GM12878 (cell line): ENCODE measurements at regions of chr5 and their contacts with region 1.

Region 1: DNA sequence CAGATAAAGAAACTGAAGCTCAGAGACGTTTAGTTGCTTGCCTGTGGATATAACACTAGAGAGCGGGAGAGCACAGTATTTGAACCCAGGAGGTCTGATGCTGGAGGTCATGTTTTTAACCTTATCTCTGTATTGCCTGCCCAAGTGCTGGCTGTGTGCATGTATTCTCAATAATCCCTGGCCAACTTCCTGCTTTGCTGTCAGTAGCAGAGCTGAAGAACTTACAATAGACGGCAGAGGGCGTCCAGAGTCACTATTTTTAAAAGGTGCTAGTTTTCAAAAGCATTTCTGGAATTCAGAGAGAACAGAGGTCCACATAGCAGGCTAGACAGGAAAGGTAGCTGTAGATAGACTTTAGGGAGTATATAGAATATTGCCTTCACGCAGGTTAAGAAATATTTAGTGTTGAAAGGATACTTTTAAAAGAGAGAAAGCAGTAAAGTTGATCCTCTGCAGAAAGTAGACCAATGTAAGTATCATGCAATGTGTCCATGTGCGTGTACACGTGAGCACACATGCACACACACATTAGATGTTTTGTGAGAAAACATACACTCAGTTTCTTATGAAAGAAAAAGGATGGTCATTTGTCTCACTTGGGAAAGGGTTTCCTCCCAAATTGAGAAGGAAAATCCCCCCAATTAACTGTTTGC is 46.3 kb downstream of the PTCD2 start:
- DNase-seq: peak; percentile 43
- ATAC-seq: peak; percentile 98
- H3K4me3 ChIP-seq: no peak overlapping the region
- H3K27ac ChIP-seq: no peak overlapping the region
- H3K4me1 ChIP-seq: peaks cover 17% of the 10 kb centered on the region
- H3K27me3 ChIP-seq: no peaks in the 10 kb centered on the region
- CTCF ChIP-seq: peak; percentile 67 to 82 (median 76)
- EP300 ChIP-seq: no peak
- POLR2A ChIP-seq: no peak
- RAD21 ChIP-seq: peak; percentile 97

Region 2: DNA sequence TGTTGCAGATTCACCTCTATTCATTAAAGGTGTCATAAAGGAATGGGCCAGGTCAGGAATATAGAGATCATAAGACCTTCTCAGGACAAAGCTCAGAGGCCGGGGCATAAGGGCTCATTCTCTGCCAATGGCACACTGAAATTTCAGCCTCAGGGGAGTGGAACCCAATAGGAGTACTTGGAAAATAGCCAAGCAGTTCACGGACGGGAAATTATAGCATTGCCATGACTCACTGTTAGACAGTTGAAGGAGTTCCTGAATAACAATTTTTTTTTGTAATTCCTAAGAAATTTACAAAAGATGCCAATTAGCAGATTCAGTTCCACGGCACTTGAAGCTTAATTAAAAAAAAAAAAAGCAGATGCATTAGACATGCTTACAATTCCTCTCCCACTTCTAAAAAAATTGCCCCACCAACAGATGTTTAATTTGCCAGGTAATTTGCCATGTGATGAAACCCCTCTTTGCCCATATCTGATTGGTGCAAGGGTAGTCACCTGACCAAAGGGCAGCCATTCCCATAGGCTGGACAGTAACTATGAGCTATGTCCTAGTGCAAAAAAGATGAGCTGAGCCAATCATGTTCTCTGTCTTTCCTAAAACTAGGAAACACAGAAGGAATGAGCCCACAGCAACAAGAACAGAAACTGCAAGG is 12.3 kb after region 1 on chr5:
- CTCF ChIA-PET with region 1: interaction called, 17 read pairs
- POLR2A ChIA-PET with region 1: no interaction called
- RAD21 ChIA-PET with region 1: interaction called, 7 read pairs
- SMC1A ChIA-PET with region 1: interaction called, 21 read pairs
- in situ Hi-C with region 1: no loop called
- intact Hi-C with region 1: no loop called
- DNase-seq: no peak
- ATAC-seq: no peak
- H3K4me3 ChIP-seq: no peak overlapping the region
- H3K27ac ChIP-seq: no peak overlapping the region
- H3K4me1 ChIP-seq: peaks cover 9% of the 10 kb centered on the region
- H3K27me3 ChIP-seq: no peaks in the 10 kb centered on the region
- CTCF ChIP-seq: no peak
- EP300 ChIP-seq: no peak
- POLR2A ChIP-seq: no peak
- RAD21 ChIP-seq: no peak

Region 3: GRCh38 chr5:72394688-72395087 is 28.2 kb after region 1 on chr5:
- CTCF ChIA-PET with region 1: interaction called, 61 read pairs
- POLR2A ChIA-PET with region 1: no interaction called
- RAD21 ChIA-PET with region 1: interaction called, 28 read pairs
- SMC1A ChIA-PET with region 1: interaction called, 25 read pairs
- in situ Hi-C with region 1: no loop called
- intact Hi-C with region 1: no loop called
- DNase-seq: no peak
- ATAC-seq: peak; percentile 89
- H3K4me3 ChIP-seq: no peak overlapping the region
- H3K27ac ChIP-seq: no peak overlapping the region
- H3K4me1 ChIP-seq: no peaks in the 10 kb centered on the region
- H3K27me3 ChIP-seq: no peaks in the 10 kb centered on the region
- CTCF ChIP-seq: peak; percentile 70 to 74 (median 74)
- EP300 ChIP-seq: no peak
- POLR2A ChIP-seq: no peak
- RAD21 ChIP-seq: peak; percentile 84

Region 4: DNA sequence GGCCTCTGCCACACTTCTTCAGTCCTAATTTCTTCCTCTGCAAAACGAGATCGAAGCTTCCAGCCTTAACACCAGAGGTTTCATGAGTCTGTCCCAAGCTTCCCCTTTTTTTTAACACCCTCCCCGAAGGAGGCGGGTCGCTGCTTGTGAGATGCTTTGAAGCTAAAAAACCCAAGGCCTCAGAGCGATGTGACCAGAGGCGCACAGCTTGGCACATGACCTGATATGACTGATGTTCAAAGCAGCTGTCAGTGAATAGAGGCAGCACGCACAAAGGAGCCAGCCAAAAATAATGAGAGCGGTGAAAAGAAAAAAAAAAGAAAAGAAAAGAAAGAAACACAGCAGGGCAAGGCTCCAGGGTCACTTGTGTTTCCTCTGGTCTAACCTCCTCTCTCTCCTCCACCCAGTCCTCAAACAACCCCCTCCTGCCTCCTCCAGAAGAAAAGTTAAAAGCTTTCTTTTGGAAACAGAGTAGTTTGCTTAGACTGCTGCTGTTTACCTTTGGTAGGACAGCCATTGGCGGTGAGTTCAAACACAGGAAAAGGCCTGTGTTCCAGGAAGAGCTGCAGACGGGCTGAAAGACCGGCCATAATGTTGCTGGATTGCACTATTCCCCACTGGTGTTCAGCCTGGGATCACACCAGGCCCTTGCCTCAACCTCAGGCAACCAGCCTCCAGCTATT is 151.7 kb after region 1 on chr5:
- CTCF ChIA-PET with region 1: interaction called, 238 read pairs
- POLR2A ChIA-PET with region 1: interaction called, 11 read pairs
- RAD21 ChIA-PET with region 1: interaction called, 159 read pairs
- SMC1A ChIA-PET with region 1: interaction called, 214 read pairs
- in situ Hi-C with region 1: loop called (anchors 10 kb)
- intact Hi-C with region 1: no loop called
- DNase-seq: no peak
- ATAC-seq: no peak; the same call in 2 of the 3 replicates
- H3K4me3 ChIP-seq: no peak overlapping the region
- H3K27ac ChIP-seq: peak overlapping the region; percentile 34
- H3K4me1 ChIP-seq: peaks cover 11% of the 10 kb centered on the region
- H3K27me3 ChIP-seq: no peaks in the 10 kb centered on the region
- CTCF ChIP-seq: no peak
- EP300 ChIP-seq: no peak
- POLR2A ChIP-seq: no peak
- RAD21 ChIP-seq: no peak

Region 5: GRCh38 chr5:72611118-72611730 is 244.8 kb after region 1 on chr5:
- CTCF ChIA-PET with region 1: interaction called, 18 read pairs
- POLR2A ChIA-PET with region 1: no interaction called
- RAD21 ChIA-PET with region 1: interaction called, 9 read pairs
- SMC1A ChIA-PET with region 1: interaction called, 4 read pairs
- in situ Hi-C with region 1: no loop called
- intact Hi-C with region 1: no loop called
- DNase-seq: no peak
- ATAC-seq: peak; percentile 99
- H3K4me3 ChIP-seq: no peak overlapping the region
- H3K27ac ChIP-seq: no peak overlapping the region
- H3K4me1 ChIP-seq: no peaks in the 10 kb centered on the region
- H3K27me3 ChIP-seq: no peaks in the 10 kb centered on the region
- CTCF ChIP-seq: peak; percentile 85 to 97 (median 94)
- EP300 ChIP-seq: no peak
- POLR2A ChIP-seq: no peak
- RAD21 ChIP-seq: peak; percentile 74